CD4-positive, alpha-beta memory T cell (primary cell): ENCODE measurements at regions of chr6 and their contacts with region 1.

Region 1: DNA sequence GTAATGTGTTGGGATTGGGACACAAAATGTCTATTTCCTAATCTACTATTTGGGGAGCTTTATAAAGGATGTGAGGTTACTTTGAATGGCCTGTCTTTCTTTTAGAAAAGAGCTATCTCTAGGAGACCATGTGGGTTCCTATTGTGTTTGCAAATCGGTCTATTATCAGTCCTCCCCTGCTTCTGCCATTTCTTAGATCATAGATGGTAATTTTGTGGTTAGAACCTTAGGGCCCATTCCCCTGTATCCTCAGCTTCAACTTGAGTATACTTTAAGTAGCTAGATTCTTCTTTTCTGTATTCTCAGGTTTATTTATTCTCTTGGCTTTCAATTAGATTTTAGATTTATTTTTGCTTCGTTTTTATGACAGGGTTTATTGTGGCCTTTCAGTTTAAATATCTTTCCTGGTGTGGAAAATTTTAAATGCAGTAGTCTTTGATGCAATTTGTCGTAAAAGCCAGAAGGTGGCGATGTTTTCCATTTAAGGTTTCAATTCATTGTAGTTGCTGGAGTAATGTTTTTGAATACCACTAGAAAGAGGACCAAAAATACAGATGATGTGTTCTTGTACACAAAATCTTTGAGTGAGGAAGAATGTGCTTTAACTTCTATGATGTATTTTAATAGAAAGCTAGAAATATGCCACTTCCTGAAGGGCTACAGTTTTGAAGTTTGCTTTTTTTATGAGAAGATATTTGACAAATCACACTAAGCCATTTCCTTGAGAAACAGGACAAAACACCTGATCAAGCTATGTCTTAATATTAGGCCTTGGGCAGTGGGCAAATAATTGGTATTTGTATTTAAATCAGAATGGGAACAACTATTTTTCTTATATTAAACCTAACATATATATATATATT is 20.3 kb downstream of the TBPL1 start:
- DNase-seq: peak in 4 of 5 donors; percentile 38 to 46 (median 42)
- H3K4me3 ChIP-seq: no peak overlapping the region
- H3K4me3 Mint-ChIP-seq: no peak overlapping the region
- H3K27ac ChIP-seq: no peak overlapping the region
- H3K27ac Mint-ChIP-seq: peak overlapping the region in 4 of 7 donors; percentile 11 to 66 (median 18)
- H3K4me1 ChIP-seq: peaks cover 37% of the 10 kb centered on the region
- H3K4me1 Mint-ChIP-seq: peaks cover 31 to 45% (median 38%) of the 10 kb centered on the region in 4 donors
- H3K27me3 ChIP-seq: no peaks in the 10 kb centered on the region
- H3K27me3 Mint-ChIP-seq: no peaks in the 10 kb centered on the region

Region 2: GRCh38 chr6:133577851-133578250 is 395.5 kb before region 1 on chr6:
- CTCF ChIA-PET with region 1: no interaction called
- POLR2A ChIA-PET with region 1: no interaction called
- intact Hi-C with region 1: no loop called
- DNase-seq: no peak
- H3K4me3 ChIP-seq: no peak overlapping the region
- H3K4me3 Mint-ChIP-seq: no peak overlapping the region
- H3K27ac ChIP-seq: no peak overlapping the region
- H3K27ac Mint-ChIP-seq: no peak overlapping the region
- H3K4me1 ChIP-seq: no peaks in the 10 kb centered on the region
- H3K4me1 Mint-ChIP-seq: no peaks in the 10 kb centered on the region
- H3K27me3 ChIP-seq: no peaks in the 10 kb centered on the region
- H3K27me3 Mint-ChIP-seq: no peaks in the 10 kb centered on the region

Region 3: GRCh38 chr6:133945158-133945557 is 28.2 kb before region 1 on chr6:
- CTCF ChIA-PET with region 1: interaction called, 10 read pairs
- POLR2A ChIA-PET with region 1: no interaction called
- intact Hi-C with region 1: no loop called
- DNase-seq: no peak
- H3K4me3 ChIP-seq: no peak overlapping the region
- H3K4me3 Mint-ChIP-seq: no peak overlapping the region
- H3K27ac ChIP-seq: no peak overlapping the region
- H3K27ac Mint-ChIP-seq: no peak overlapping the region
- H3K4me1 ChIP-seq: no peaks in the 10 kb centered on the region
- H3K4me1 Mint-ChIP-seq: no peaks in the 10 kb centered on the region
- H3K27me3 ChIP-seq: no peaks in the 10 kb centered on the region
- H3K27me3 Mint-ChIP-seq: peaks cover 6 to 8% of the 10 kb centered on the region in 2 donors

Region 4: DNA sequence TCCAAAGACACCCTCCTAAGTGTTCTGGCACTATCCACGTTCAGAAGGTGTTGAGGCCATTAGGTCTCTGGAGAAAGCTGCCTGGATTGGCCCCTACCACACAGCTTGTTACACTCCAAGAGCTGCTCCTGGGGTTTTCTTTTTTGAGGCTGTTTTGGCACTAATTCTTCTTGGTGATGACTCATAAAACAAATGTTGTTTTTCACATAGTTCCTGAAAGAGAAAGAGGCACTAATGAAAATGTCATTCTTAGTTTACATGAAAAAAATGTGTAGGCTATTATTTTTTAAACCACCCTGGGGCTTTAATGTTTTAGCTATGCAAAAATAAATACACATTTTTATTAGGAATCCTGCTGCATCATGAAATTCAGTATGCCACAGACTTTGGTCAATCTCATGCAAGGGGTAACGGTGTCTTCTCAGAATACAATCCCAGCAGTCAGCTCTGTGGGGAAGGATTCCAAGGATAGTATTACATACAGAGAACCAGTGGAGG is 17.8 kb after region 1 on chr6:
- CTCF ChIA-PET with region 1: interaction called, 23 read pairs
- POLR2A ChIA-PET with region 1: no interaction called
- intact Hi-C with region 1: no loop called
- DNase-seq: no peak
- H3K4me3 ChIP-seq: no peak overlapping the region
- H3K4me3 Mint-ChIP-seq: no peak overlapping the region
- H3K27ac ChIP-seq: no peak overlapping the region
- H3K27ac Mint-ChIP-seq: no peak overlapping the region
- H3K4me1 ChIP-seq: peaks cover 3% of the 10 kb centered on the region
- H3K4me1 Mint-ChIP-seq: peaks cover 0 to 4% (median 2%) of the 10 kb centered on the region in 4 donors
- H3K27me3 ChIP-seq: no peaks in the 10 kb centered on the region
- H3K27me3 Mint-ChIP-seq: no peaks in the 10 kb centered on the region